ENCODE measurements at regions of chr7 and their contacts with region 1.

Region 1: GRCh38 chr7:150432915-150433892 is 17.2 kb upstream of the GIMAP8 start:
- DNase-seq: peak; percentile 53
- CTCF ChIP-seq: no peak

Region 2: DNA sequence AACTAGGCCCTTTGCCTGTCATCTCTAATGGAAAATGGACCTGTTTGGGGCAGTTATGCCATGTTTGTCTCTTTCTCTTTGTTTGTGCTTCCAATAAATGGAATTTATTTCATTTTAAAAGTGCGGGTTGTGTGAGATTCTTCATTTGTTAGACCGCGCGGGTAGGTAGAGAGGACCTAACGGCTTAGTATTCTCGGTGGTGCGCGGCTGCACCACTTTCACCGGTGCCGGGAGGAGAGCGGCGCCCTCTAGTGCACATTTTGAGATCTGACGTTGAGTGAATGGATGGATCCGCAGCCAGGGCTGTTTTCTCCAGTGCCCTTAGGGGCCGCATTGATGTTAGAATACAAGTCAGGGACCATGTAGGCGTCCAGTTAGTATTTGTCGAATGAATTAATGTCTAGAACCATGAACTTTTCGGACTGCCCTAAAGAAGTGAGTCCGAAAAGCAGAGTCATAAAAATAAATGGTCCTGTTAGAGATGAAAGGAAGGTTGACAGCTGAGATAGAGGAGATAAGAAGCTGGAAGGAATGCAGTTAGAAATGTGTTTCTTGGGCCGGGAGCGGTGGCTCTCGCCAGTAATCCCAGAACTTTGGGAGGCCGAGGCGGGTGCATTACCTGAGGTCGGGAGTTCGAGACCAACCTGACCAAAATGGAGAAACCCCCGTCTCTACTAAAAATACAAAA is 12.1 kb before region 1 on chr7:
- CTCF ChIA-PET with region 1: interaction called, 14 read pairs
- POLR2A ChIA-PET with region 1: interaction called, 3 read pairs
- DNase-seq: peak; percentile 88
- CTCF ChIP-seq: peak; percentile 82

Region 3: DNA sequence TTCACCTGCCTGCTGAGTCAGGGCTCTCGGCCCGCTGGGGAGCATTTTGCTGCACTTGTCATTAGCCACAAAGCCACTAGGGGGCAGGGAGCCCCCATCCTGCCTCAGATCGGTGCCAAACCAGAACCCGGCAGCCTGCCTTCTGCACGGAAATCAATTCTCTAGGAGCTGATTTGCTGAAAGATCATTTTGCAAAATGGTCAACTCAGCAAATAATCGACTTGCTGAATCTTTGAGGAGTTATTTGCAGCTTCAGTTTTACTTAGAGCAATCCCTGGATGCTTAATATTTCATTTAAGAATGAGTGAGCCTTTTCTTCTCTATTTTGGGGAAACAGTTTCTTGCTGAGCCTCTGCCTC is 15.6 kb after region 1 on chr7:
- CTCF ChIA-PET with region 1: interaction called, 37 read pairs
- POLR2A ChIA-PET with region 1: no interaction called
- DNase-seq: peak; percentile 88
- CTCF ChIP-seq: peak; percentile 93

Measured in GM10248 (cell line).